ENCODE measurements at regions of chr1 and their contacts with region 1.

Region 1: GRCh38 chr1:6423321-6423999 is 1.1 kb upstream of the ESPN start:
- DNase-seq: peak; percentile 91
- ATAC-seq: peak; percentile 57
- H3K4me3 Mint-ChIP-seq: peak overlapping the region; percentile 60
- H3K27ac Mint-ChIP-seq: no peak overlapping the region
- H3K4me1 Mint-ChIP-seq: peaks cover 6% of the 10 kb centered on the region
- H3K27me3 Mint-ChIP-seq: peaks cover 81% of the 10 kb centered on the region
- CTCF ChIP-seq: peak; percentile 91

Region 2: GRCh38 chr1:6141592-6141991 is 281.9 kb before region 1 on chr1:
- CTCF ChIA-PET with region 1: no interaction called
- POLR2A ChIA-PET with region 1: no interaction called
- DNase-seq: peak; percentile 65
- ATAC-seq: peak; percentile 76
- H3K4me3 Mint-ChIP-seq: no peak overlapping the region
- H3K27ac Mint-ChIP-seq: no peak overlapping the region
- H3K4me1 Mint-ChIP-seq: no peaks in the 10 kb centered on the region; the same call in 1 of the 2 replicates
- H3K27me3 Mint-ChIP-seq: no peaks in the 10 kb centered on the region
- CTCF ChIP-seq: no peak

Region 3: DNA sequence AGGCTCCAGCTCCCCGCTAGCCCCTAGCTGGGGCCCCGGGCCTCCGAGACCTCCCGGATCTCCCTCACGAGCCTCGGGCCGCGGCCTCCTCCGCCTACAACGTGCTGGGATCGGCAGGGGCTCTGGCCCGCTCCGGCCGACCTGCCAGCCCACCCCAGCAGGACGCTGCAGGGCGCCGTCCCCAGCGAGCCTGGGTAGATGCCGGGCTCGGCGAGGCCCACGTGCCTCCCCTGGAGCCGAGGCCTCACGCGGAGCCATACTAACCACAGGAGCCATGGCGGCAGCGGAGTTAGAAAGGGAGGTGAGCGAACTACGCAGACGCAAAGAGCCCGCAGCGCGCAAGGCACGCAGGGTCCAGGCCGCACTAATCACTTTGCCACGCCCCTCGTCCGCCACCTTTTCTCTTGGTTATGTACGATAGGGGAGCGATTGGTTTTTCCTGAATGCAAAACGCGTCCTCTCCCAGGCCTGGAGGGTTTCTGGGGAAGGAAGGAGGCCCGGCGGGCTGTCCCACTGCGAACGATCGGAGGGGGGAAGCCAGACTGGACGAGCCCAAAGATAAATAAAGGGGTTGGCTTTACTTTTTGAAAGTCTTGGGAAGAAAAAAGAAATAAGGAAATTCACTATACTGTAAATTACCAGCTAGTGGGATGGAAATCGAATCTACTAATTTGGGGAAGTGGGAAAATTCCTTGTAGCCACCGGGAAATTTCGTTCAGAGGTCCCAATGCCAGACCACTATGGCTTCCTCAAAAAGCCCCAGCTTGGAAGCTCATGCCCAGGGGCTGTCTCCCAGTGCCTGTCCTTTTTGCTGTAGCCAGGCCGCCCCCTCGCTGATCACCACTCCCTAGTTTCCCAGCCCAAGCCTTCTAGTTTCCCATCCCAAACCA is 223.9 kb before region 1 on chr1 and contains the start of gene RPL22:
- CTCF ChIA-PET with region 1: interaction called, 11 read pairs
- POLR2A ChIA-PET with region 1: no interaction called
- DNase-seq: peak; percentile 99
- ATAC-seq: peak; percentile 93
- H3K4me3 Mint-ChIP-seq: peak within 1 kb of the TSS; percentile 97
- H3K27ac Mint-ChIP-seq: peak within 1 kb of the TSS; percentile 96
- H3K4me1 Mint-ChIP-seq: peaks cover 37% of the 10 kb centered on the region
- H3K27me3 Mint-ChIP-seq: no peaks in the 10 kb centered on the region
- CTCF ChIP-seq: no peak
- total RNA-seq, gene RPL22: 441 to 512 TPM (median 491 TPM) in 3 replicates

Region 4: GRCh38 chr1:6359216-6360116 is 64.0 kb before region 1 on chr1:
- CTCF ChIA-PET with region 1: interaction called, 24 read pairs
- POLR2A ChIA-PET with region 1: no interaction called
- DNase-seq: peak; percentile 42
- ATAC-seq: peak; percentile 11
- H3K4me3 Mint-ChIP-seq: no peak overlapping the region
- H3K27ac Mint-ChIP-seq: peak overlapping the region; percentile 76
- H3K4me1 Mint-ChIP-seq: peaks cover 44% of the 10 kb centered on the region
- H3K27me3 Mint-ChIP-seq: no peaks in the 10 kb centered on the region
- CTCF ChIP-seq: no peak

Region 5: GRCh38 chr1:6401673-6402072 is 21.8 kb before region 1 on chr1:
- CTCF ChIA-PET with region 1: interaction called, 18 read pairs
- POLR2A ChIA-PET with region 1: no interaction called
- DNase-seq: no peak
- ATAC-seq: no peak
- H3K4me3 Mint-ChIP-seq: no peak overlapping the region
- H3K27ac Mint-ChIP-seq: no peak overlapping the region
- H3K4me1 Mint-ChIP-seq: no peaks in the 10 kb centered on the region
- H3K27me3 Mint-ChIP-seq: peaks cover 20% of the 10 kb centered on the region
- CTCF ChIP-seq: no peak

Region 6: GRCh38 chr1:6454856-6455751 is 31.6 kb after region 1 on chr1:
- CTCF ChIA-PET with region 1: interaction called, 40 read pairs
- POLR2A ChIA-PET with region 1: no interaction called
- DNase-seq: peak; percentile 52
- ATAC-seq: peak; percentile 46
- H3K4me3 Mint-ChIP-seq: no peak overlapping the region
- H3K27ac Mint-ChIP-seq: no peak overlapping the region
- H3K4me1 Mint-ChIP-seq: peaks cover 19% of the 10 kb centered on the region
- H3K27me3 Mint-ChIP-seq: no peaks in the 10 kb centered on the region
- CTCF ChIP-seq: no peak

Region 7: GRCh38 chr1:6489799-6490180 is 66.3 kb after region 1 on chr1:
- CTCF ChIA-PET with region 1: interaction called, 21 read pairs
- POLR2A ChIA-PET with region 1: no interaction called
- DNase-seq: peak; percentile 87
- ATAC-seq: peak; percentile 46
- H3K4me3 Mint-ChIP-seq: peak overlapping the region; percentile 77
- H3K27ac Mint-ChIP-seq: no peak overlapping the region
- H3K4me1 Mint-ChIP-seq: peaks cover 30% of the 10 kb centered on the region
- H3K27me3 Mint-ChIP-seq: peaks cover 2% of the 10 kb centered on the region; the same call in 1 of the 2 replicates
- CTCF ChIP-seq: peak; percentile 99

Region 8: DNA sequence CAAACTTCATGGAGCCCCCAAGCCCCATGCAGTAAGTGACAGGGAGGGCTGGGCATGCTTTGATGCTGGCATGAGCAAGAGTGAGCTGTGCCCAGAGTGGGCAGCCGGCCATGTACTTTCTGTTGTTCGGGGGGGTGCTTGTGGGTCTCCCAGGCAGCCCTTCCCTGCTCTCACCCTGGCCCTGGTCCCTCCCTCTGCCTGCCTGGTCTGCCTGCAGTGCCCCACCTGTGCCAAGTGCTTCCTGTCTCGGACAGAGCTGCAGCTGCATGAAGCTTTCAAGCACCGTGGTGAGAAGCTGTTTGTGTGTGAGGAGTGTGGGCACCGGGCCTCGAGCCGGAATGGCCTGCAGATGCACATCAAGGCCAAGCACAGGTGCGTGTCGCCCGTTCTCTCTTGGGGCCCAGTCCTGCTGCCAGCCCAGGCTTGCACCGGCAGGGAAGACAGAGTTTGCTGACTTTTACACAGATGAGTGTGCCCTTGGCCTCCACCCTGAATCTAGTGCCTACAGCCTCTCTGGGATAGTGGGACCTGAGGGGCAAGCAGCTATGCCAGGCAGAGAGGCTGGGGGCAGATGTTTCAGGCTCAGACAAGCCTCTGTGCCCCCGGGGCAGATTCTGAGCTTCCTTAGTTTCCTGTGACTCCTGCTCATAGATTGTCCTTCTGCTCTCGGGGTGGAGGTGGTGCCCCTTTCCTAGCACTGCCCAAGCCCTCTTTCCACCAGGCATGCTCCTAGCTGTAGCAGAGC is 164.0 kb after region 1 on chr1:
- CTCF ChIA-PET with region 1: no interaction called
- POLR2A ChIA-PET with region 1: no interaction called
- DNase-seq: no peak
- ATAC-seq: no peak
- H3K4me3 Mint-ChIP-seq: no peak overlapping the region
- H3K27ac Mint-ChIP-seq: peak overlapping the region; percentile 83
- H3K4me1 Mint-ChIP-seq: peaks cover 3% of the 10 kb centered on the region; the same call in 1 of the 2 replicates
- H3K27me3 Mint-ChIP-seq: no peaks in the 10 kb centered on the region
- CTCF ChIP-seq: no peak

Measured in WTC11 (cell line).